ENCODE measurements at regions of chr17 and their contacts with region 1.

Region 1: GRCh38 chr17:51537996-51538550 is 277.7 kb downstream of the UTP18 start:
- DNase-seq: no peak
- H3K4me3 ChIP-seq: no peak overlapping the region
- H3K27ac ChIP-seq: no peak overlapping the region
- H3K4me1 ChIP-seq: no peaks in the 10 kb centered on the region
- H3K27me3 ChIP-seq: no peaks in the 10 kb centered on the region
- CTCF ChIP-seq: no peak
- EP300 ChIP-seq: no peak
- POLR2A ChIP-seq: no peak

Region 2: DNA sequence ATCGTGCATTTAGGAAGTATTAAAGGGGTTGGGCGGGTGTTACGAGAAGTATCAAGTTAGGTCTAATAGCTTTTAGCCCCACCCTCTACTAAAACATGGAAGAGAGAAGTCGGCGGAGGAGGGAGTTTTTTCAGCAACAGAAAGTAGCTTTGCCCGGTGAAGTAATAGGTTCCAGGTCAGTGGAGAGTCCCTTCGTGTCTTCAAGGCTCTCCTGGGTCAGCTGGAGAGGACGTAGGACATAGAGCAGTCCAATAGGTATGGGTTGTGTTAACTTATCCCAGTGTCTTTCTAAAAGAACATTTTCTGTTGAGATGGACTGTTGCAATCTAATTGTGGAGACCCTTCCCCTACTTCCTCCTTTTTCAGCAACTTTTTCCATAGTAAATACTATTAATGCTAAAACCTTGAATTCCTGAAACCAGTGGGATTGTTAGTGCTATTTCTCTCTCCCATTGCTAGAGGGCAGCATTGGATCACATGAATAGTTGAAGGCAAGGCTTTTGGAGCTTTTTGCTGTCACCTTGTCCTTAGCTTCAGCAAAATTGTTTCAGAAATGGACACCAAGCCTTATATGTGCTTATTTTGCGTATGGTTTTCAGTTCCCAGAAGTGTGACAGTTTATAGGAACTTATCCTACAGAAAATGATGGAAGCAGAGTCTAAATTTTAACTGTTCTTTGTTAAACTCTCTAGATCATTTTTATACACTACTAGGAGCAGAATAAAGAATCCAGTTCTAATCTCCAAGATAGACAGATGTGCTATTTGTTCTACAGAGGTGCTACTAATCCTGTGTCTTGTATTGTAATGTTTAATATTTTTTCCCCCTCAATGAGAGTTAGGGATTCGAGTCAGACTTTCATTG is 239.3 kb before region 1 on chr17:
- intact Hi-C with region 1: loop called (anchors 5 kb)
- DNase-seq: peak in 1 of 2 donors; percentile 69
- H3K4me3 ChIP-seq: no peak overlapping the region
- H3K27ac ChIP-seq: peak overlapping the region in 3 of 5 donors; percentile 5 to 32 (median 13)
- H3K4me1 ChIP-seq: peaks cover 0 to 11% (median 5%) of the 10 kb centered on the region in 4 donors
- H3K27me3 ChIP-seq: no peaks in the 10 kb centered on the region
- CTCF ChIP-seq: peak in 5 of 7 experiments; percentile 35 to 51 (median 47)
- EP300 ChIP-seq: no peak
- POLR2A ChIP-seq: no peak

Region 3: GRCh38 chr17:51435641-51436091 is 102.4 kb before region 1 on chr17:
- intact Hi-C with region 1: no loop called
- DNase-seq: peak; percentile 80 to 82
- H3K4me3 ChIP-seq: no peak overlapping the region
- H3K27ac ChIP-seq: no peak overlapping the region
- H3K4me1 ChIP-seq: no peaks in the 10 kb centered on the region
- H3K27me3 ChIP-seq: peaks cover 0 to 4% (median 0%) of the 10 kb centered on the region in 3 donors
- CTCF ChIP-seq: peak in 5 of 7 experiments; percentile 12 to 34 (median 32)
- EP300 ChIP-seq: no peak
- POLR2A ChIP-seq: no peak

Region 4: GRCh38 chr17:51640108-51640622 is 102.1 kb after region 1 on chr17:
- intact Hi-C with region 1: no loop called
- DNase-seq: no peak
- H3K4me3 ChIP-seq: no peak overlapping the region
- H3K27ac ChIP-seq: no peak overlapping the region
- H3K4me1 ChIP-seq: no peaks in the 10 kb centered on the region
- H3K27me3 ChIP-seq: peaks cover 0 to 26% (median 0%) of the 10 kb centered on the region in 3 donors
- CTCF ChIP-seq: no peak
- EP300 ChIP-seq: no peak
- POLR2A ChIP-seq: no peak

Region 5: DNA sequence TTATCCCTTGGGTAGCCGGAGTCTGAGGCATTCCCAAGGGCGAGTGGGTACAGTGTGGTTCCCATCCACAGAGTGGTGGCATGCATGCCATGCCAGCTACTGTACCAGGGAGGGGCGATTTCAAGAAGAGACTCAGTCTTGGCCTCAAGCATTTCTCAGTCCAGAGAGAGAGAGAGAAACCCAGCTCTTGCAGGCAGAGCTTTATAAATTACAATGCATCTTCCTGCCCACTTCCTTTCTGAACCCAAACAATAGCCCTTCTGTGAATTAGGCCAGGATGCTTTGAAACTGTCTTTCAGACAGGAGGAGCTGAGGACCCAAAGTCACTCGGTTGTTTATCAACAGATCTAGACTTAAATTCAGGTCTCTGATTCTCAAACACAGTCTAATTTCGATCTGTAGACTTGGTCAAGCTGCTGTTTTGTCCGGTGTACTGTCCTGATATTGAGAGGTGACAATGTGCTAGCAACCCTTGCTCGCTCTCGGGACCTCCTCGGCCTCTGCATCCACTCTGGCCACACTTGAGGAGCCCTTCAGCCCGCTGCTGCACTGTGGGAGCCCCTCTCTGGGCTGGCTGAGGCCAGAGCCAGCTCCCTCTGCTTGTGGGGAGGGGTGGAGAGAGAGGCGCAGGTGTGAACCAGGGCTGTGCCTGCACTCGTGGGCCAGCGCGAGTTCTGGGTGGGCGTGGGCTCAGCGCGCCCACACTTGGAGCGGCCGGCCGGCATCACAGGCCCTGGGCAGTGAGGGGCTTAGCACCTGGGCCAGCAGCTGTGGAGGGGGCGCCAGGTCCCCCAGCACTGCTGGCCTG is 130.3 kb after region 1 on chr17:
- intact Hi-C with region 1: no loop called
- DNase-seq: no peak
- H3K4me3 ChIP-seq: no peak overlapping the region
- H3K27ac ChIP-seq: no peak overlapping the region
- H3K4me1 ChIP-seq: no peaks in the 10 kb centered on the region
- H3K27me3 ChIP-seq: no peaks in the 10 kb centered on the region
- CTCF ChIP-seq: no peak
- EP300 ChIP-seq: no peak
- POLR2A ChIP-seq: no peak